SK-N-SH (cell line): ENCODE measurements at regions of chr17 and their contacts with region 1.

Region 1: DNA sequence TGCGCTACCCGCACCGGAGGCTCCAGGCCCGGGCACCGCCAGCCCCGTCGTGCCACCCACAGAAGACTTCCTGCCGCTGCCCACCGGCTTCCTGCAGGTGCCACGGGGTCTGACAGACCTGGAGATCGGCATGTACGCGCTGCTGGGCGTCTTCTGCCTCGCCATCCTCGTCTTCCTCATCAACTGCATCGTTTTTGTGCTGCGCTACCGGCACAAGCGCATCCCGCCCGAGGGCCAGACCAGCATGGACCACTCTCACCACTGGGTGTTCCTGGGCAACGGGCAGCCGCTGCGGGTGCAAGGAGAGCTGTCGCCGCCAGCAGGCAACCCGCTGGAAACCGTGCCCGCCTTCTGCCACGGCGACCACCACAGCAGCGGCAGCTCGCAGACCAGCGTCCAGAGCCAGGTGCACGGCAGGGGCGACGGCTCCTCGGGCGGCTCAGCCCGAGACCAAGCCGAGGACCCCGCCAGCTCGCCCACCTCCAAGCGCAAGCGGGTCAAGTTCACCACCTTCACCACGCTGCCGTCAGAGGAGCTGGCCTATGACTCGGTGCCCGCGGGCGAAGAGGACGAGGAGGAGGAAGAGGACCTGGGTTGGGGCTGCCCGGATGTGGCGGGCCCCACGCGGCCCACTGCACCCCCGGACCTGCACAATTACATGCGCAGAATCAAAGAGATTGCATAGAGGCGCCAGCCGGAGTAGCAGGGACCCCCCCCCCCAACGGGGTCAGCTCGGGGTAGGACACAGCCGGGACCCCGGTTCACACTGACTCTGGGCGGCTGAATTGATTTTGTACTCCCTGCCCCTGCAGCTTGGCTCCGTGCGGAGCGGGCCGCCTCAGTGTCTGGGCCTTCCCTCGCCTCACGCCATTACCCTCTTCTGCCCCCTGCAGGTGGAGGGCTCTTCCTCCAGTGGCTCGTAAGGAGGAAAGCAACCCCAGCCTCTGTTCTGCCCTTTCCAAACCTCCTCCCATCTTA is 58.5 kb downstream of the TMEM132E start:
- DNase-seq: peak; percentile 92
- H3K4me3 ChIP-seq: no peak overlapping the region; a peak in 1 of 4 replicates
- H3K27ac ChIP-seq: no peak overlapping the region
- H3K4me1 ChIP-seq: peaks cover 0 to 4% of the 10 kb centered on the region in 2 experiments; a peak in 1 of 4 replicates
- H3K27me3 ChIP-seq: no peaks in the 10 kb centered on the region
- CTCF ChIP-seq: peak; percentile 66
- EP300 ChIP-seq: no peak
- RAD21 ChIP-seq: peak; percentile 84

Region 2: GRCh38 chr17:34579017-34579946 is 58.6 kb before region 1 on chr17 and contains the start of gene TMEM132E:
- CTCF ChIA-PET with region 1: interaction called, 42 read pairs
- POLR2A ChIA-PET with region 1: no interaction called
- DNase-seq: peak; percentile 75
- H3K4me3 ChIP-seq: peak within 1 kb of the TSS; percentile 38 to 41
- H3K27ac ChIP-seq: no peak within 1 kb of the TSS
- H3K4me1 ChIP-seq: peaks cover 0 to 18% of the 10 kb centered on the region in 2 experiments; a peak in 1 of 4 replicates
- H3K27me3 ChIP-seq: peaks cover 76% of the 10 kb centered on the region
- CTCF ChIP-seq: no peak
- EP300 ChIP-seq: no peak
- RAD21 ChIP-seq: no peak
- polyA plus RNA-seq, gene TMEM132E: not detected in 2 replicates

Region 3: DNA sequence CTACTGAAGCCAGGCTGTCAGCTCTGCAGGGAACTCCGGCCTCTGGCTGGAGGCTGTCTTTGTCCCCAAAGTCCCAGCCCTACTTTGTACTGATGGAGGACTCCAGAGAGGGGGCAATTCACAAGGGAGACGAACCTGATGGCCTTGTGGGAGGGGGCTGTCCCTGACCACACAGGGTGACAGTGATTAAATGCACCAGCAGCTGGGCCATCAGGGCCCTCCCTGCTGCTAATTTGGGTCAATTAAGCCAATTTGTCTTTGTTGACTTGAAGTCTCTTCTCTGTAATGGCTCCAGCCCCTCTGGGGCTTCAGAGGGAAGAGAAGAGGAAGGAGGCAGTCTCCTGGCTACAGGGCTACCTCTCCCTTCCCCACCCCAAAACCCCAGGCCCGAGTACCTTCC is 36.4 kb before region 1 on chr17:
- CTCF ChIA-PET with region 1: interaction called, 17 read pairs
- POLR2A ChIA-PET with region 1: no interaction called
- DNase-seq: no peak
- H3K4me3 ChIP-seq: no peak overlapping the region
- H3K27ac ChIP-seq: no peak overlapping the region
- H3K4me1 ChIP-seq: peaks cover 0 to 13% of the 10 kb centered on the region in 2 experiments; a peak in 1 of 4 replicates
- H3K27me3 ChIP-seq: no peaks in the 10 kb centered on the region
- CTCF ChIP-seq: no peak
- EP300 ChIP-seq: no peak
- RAD21 ChIP-seq: no peak

Region 4: GRCh38 chr17:34626141-34626681 is 11.6 kb before region 1 on chr17:
- CTCF ChIA-PET with region 1: interaction called, 60 read pairs
- POLR2A ChIA-PET with region 1: no interaction called
- DNase-seq: no peak
- H3K4me3 ChIP-seq: no peak overlapping the region
- H3K27ac ChIP-seq: no peak overlapping the region
- H3K4me1 ChIP-seq: peaks cover 0 to 7% of the 10 kb centered on the region in 2 experiments; a peak in 1 of 4 replicates
- H3K27me3 ChIP-seq: no peaks in the 10 kb centered on the region
- CTCF ChIP-seq: no peak
- EP300 ChIP-seq: no peak
- RAD21 ChIP-seq: no peak

Region 5: DNA sequence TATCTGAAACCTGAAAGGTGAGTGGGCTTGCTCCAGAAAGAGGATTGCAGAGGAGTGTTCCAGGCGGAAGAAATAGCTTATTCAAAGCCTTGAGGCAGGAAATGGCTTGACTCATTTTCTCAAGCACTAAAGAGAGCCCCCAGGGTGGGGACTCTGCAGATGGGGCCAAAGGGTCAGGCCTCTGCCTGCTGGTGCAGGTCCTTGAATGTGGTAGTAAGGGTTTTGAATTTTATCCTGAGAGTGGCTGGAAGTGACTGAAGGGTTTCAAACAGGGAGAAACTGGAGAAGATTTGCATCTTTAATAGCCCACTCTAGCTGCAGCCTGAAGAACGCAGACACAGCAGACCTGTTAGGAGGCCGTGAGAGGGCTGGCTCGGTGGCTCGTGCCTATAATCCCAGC is 179.0 kb after region 1 on chr17:
- CTCF ChIA-PET with region 1: no interaction called
- POLR2A ChIA-PET with region 1: no interaction called
- DNase-seq: no peak
- H3K4me3 ChIP-seq: no peak overlapping the region
- H3K27ac ChIP-seq: no peak overlapping the region
- H3K4me1 ChIP-seq: peaks cover 0 to 27% of the 10 kb centered on the region in 2 experiments; a peak in 1 of 4 replicates
- H3K27me3 ChIP-seq: no peaks in the 10 kb centered on the region
- CTCF ChIP-seq: no peak
- EP300 ChIP-seq: no peak
- RAD21 ChIP-seq: no peak

Region 6: GRCh38 chr17:34892461-34893249 is 254.8 kb after region 1 on chr17:
- CTCF ChIA-PET with region 1: interaction called, 36 read pairs
- POLR2A ChIA-PET with region 1: no interaction called
- DNase-seq: peak; percentile 86
- H3K4me3 ChIP-seq: peak overlapping the region in 1 of 2 experiments; percentile 51; a peak in 1 of 4 replicates
- H3K27ac ChIP-seq: no peak overlapping the region
- H3K4me1 ChIP-seq: no peaks in the 10 kb centered on the region
- H3K27me3 ChIP-seq: no peaks in the 10 kb centered on the region
- CTCF ChIP-seq: peak; percentile 50
- EP300 ChIP-seq: no peak
- RAD21 ChIP-seq: peak; percentile 91